Activated CD4-positive, alpha-beta memory T cell treated with anti-CD3 and anti-CD28 coated beads, Interleukin-2, amount 10 ng/mL, durations not matched to agents 7 days and 5 days (primary cell): ENCODE measurements at regions of chr1 and their contacts with region 1.

Region 1: DNA sequence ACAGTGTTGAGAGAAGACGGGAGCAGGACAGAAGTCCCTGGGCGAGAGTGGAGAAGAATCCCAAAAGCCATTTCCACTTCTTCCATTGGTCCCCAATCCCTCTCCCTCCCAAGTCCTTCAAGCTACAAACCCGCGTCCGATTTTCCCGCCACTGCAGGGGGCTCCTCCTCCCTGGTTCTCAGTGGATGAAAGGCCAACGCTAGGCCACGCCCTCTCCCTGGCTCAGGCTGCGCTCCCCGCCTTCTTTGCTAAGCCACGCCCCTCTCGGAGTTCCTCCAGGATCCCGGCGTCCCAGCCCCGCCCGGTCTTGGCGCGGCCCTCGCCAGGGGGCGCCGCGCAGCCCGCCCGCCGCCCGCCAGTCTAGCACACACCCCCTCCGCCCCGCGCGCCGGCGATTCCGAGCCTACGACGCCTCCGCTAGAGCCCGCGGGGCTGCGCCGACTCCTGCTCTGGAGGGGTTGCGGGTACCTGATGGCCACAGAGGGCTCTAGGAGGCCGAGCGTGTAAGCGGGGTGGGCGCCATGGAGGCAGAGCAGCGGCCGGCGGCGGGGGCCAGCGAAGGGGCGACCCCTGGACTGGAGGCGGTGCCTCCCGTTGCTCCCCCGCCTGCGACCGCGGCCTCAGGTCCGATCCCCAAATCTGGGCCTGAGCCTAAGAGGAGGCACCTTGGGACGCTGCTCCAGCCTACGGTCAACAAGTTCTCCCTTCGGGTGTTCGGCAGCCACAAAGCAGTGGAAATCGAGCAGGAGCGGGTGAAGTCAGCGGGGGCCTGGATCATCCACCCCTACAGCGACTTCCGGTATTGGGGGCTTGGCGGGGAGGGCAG is at the start of gene HCN3:
- DNase-seq: peak; percentile 93
- H3K4me3 Mint-ChIP-seq: peak within 1 kb of the TSS; percentile 56
- H3K27ac Mint-ChIP-seq: no peak within 1 kb of the TSS
- H3K4me1 Mint-ChIP-seq: peaks cover 31% of the 10 kb centered on the region
- H3K27me3 Mint-ChIP-seq: peaks cover 4% of the 10 kb centered on the region
- total RNA-seq, gene HCN3: 3.7 to 4.9 TPM

Region 2: DNA sequence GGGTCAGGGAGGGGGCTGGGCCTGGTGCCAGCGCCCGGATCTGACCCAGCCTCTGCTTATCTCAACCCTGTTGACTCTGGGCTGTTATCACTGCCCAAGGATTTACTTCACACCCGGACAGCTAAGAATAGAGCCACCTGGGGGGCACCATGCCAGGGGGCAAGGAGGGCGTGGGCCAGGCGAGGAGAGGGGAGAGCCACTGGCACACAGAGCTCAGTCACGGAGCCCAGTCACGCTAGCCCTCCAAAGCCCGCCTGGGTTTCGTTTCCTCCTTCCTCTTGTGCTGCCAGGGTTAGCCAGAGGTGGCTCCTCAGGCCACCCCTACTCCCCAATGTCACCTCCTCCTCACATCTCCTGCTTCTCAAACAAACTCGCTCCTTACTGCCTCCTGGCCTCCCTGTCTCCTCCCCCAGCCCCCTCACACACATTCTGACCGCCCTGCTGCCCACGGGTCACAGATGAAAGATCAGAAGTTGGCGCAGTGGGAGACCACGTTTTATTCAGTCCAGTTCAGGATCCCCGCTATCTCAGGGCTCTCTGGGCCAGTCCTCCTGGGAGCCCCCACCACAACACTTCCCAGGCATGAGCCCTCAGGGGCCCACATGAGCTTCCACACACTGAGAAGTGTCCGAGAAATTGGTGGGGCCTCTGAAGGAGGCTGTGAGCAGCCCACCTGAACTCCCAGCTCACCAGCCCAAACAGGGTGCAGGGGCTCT is 91.8 kb before region 1 on chr1:
- CTCF ChIA-PET with region 1: no interaction called
- POLR2A ChIA-PET with region 1: no interaction called
- DNase-seq: no peak
- H3K4me3 Mint-ChIP-seq: no peak overlapping the region
- H3K27ac Mint-ChIP-seq: no peak overlapping the region
- H3K4me1 Mint-ChIP-seq: peaks cover 16% of the 10 kb centered on the region
- H3K27me3 Mint-ChIP-seq: no peaks in the 10 kb centered on the region

Region 3: DNA sequence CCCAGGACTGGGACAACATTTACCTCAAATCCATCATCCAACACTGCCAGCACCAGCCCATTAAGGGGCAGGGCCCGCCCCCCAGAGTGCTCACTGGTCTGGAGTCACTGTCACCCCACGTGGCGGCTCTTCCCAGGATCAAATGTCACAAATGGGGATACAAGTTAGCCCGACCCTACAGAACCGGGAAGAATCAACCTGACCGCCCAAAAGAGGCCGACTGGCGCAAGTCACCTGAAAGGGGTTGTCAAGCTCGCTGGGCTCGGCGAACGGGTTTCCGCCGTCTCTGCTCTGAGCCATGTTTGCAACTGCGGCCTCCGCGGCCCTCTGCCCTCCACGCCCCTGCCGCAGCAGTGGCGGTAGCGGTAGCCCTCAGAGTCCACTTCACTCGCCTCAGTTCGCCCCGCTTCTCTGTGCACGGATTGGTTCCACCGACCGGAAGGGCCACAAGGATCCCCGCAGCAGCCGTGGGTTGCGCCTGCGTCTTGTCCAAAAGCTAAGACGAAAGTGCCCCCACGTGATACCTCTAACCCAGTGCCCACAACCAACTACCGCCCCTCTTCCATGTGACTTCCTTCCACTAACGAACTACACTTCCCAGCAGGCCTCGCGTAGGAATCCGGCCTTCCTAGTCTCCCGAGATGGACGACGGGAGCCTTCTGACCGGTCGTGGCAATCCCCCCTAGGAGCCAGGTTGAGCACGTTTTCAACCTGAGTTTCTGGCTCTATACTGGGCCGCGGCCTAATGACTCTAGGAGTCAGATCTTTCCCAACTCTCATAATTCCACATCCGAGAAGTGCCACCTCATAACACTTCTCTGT is 15.2 kb before region 1 on chr1 and contains the start of gene SCAMP3:
- CTCF ChIA-PET with region 1: interaction called, 13 read pairs
- POLR2A ChIA-PET with region 1: interaction called, 57 read pairs
- DNase-seq: peak; percentile 90
- H3K4me3 Mint-ChIP-seq: peak within 1 kb of the TSS; percentile 98
- H3K27ac Mint-ChIP-seq: peak within 1 kb of the TSS; percentile 91
- H3K4me1 Mint-ChIP-seq: peaks cover 44% of the 10 kb centered on the region
- H3K27me3 Mint-ChIP-seq: no peaks in the 10 kb centered on the region
- total RNA-seq, gene SCAMP3: 87.5 to 91.9 TPM

Region 4: DNA sequence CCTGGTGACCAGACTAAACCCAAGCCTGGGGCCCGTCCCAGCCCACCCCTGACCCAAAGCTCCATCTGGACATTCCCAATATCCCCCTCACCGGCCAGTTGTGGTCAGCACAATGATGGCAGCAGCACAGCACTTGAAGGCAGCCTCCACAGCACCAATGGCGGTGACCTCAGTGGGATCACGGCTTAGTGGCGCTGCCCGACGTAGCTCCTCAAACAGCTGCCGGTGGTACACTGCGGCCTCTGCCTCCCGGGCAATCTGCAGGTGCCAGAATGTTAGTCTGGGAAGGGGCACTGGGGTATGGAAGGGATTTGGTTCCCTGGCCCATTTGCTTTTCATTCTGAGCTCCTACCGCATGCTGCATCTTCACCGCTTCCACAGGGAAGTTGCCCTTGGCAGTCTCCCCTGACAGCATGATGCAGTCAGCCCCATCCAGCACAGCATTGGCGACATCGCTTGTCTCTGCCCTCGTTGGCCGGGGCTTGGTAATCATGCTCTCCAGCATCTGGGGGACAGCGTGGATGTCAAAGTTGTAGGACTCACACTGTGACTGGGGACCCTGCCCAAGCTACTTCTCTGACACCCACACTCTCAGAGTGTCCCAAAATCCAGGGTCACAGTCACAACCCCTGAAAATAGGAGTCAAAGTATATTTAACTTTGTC is 15.9 kb after region 1 on chr1:
- CTCF ChIA-PET with region 1: no interaction called
- POLR2A ChIA-PET with region 1: no interaction called
- DNase-seq: no peak
- H3K4me3 Mint-ChIP-seq: no peak overlapping the region
- H3K27ac Mint-ChIP-seq: no peak overlapping the region
- H3K4me1 Mint-ChIP-seq: peaks cover 8% of the 10 kb centered on the region
- H3K27me3 Mint-ChIP-seq: peaks cover 48% of the 10 kb centered on the region